ENCODE measurements at regions of chr2 and their contacts with region 1.

Region 1: DNA sequence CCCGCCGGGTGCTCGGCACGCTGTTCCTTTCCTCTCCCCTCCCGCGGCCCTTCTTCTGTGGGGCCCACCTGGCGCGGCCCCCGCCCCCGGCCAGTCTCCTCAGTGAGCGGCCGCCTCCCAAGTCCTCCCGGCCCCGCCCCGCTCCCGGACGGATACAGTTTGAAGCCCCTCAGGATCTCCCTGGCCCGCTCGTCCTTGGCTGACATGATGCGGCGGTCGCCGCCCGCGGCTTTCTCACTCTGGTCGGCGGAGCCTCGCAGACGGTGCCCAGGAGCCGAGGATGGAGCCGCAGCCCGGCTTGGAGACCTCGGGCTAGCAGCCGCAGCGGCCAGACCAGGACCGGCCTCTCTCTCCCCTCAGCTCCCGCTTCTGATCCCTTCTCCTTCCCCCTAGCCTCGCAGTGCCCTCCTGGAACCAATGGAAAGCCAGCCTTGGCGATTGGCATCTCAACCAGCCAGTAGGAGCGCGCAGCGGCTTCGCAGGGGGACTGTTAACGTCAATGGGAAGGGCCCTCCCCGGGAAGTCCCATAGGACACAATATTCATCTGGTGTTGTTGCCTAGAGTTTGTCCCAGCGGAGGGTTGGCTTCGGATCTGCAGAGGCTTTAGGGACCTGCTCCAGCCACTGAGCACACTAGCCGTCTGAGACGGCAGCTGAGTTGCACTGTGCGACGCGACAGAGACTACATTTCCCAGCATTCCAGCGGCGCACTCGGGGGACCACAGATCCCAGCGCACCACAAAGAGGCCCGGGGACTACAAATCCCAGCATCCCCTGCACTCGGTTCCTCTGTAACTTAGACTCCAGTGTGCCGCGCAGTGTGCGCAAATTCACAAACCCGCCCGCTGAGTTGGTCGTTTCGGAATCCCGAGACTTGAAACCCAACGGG is at the start of gene PDE6D:
- DNase-seq: peak; percentile 90 to 99 (median 95)
- ATAC-seq: peak; percentile 89
- H3K4me3 ChIP-seq: peak within 1 kb of the TSS; percentile 78 to 97
- H3K4me3 Mint-ChIP-seq: peak within 1 kb of the TSS; percentile 99
- H3K27ac ChIP-seq: peak within 1 kb of the TSS; percentile 53 to 89
- H3K27ac Mint-ChIP-seq: peak within 1 kb of the TSS; percentile 96
- H3K4me1 ChIP-seq: peaks cover 44% of the 10 kb centered on the region
- H3K4me1 Mint-ChIP-seq: peaks cover 71% of the 10 kb centered on the region
- H3K27me3 ChIP-seq: no peaks in the 10 kb centered on the region
- H3K27me3 Mint-ChIP-seq: no peaks in the 10 kb centered on the region
- CTCF ChIP-seq: no peak
- total RNA-seq, gene PDE6D: 4.7 to 5.6 TPM

Region 2: GRCh38 chr2:229927817-229928321 is 1853.3 kb before region 1 on chr2:
- CTCF ChIA-PET with region 1: no interaction called
- POLR2A ChIA-PET with region 1: no interaction called
- intact Hi-C with region 1: loop called (anchors 5 to 10 kb)
- DNase-seq: peak in 1 of 9 experiments; percentile 36
- ATAC-seq: peak; percentile 38
- H3K4me3 ChIP-seq: no peak overlapping the region
- H3K4me3 Mint-ChIP-seq: no peak overlapping the region
- H3K27ac ChIP-seq: no peak overlapping the region
- H3K27ac Mint-ChIP-seq: no peak overlapping the region
- H3K4me1 ChIP-seq: no peaks in the 10 kb centered on the region
- H3K4me1 Mint-ChIP-seq: peaks cover 27% of the 10 kb centered on the region
- H3K27me3 ChIP-seq: no peaks in the 10 kb centered on the region
- H3K27me3 Mint-ChIP-seq: no peaks in the 10 kb centered on the region
- CTCF ChIP-seq: no peak

Region 3: GRCh38 chr2:231463698-231464575 is 317.2 kb before region 1 on chr2 and contains the start of gene NCL:
- CTCF ChIA-PET with region 1: no interaction called
- POLR2A ChIA-PET with region 1: no interaction called
- intact Hi-C with region 1: loop called (anchors 1 to 5 kb)
- DNase-seq: peak; percentile 71 to 94 (median 82)
- ATAC-seq: peak; percentile 62
- H3K4me3 ChIP-seq: peak within 1 kb of the TSS; percentile 97
- H3K4me3 Mint-ChIP-seq: peak within 1 kb of the TSS; percentile 96
- H3K27ac ChIP-seq: peak within 1 kb of the TSS; percentile 97 to 98
- H3K27ac Mint-ChIP-seq: peak within 1 kb of the TSS; percentile 100
- H3K4me1 ChIP-seq: peaks cover 36% of the 10 kb centered on the region
- H3K4me1 Mint-ChIP-seq: peaks cover 52% of the 10 kb centered on the region
- H3K27me3 ChIP-seq: no peaks in the 10 kb centered on the region
- H3K27me3 Mint-ChIP-seq: no peaks in the 10 kb centered on the region
- CTCF ChIP-seq: no peak
- total RNA-seq, gene NCL: 390 to 394 TPM

Region 4: GRCh38 chr2:231662028-231662810 is 118.9 kb before region 1 on chr2:
- CTCF ChIA-PET with region 1: no interaction called
- POLR2A ChIA-PET with region 1: no interaction called
- intact Hi-C with region 1: loop called in 1 of 2 experiments (anchors 2 kb)
- DNase-seq: peak; percentile 94 to 99 (median 96)
- ATAC-seq: peak; percentile 91
- H3K4me3 ChIP-seq: peak overlapping the region; percentile 60 to 82
- H3K4me3 Mint-ChIP-seq: peak overlapping the region; percentile 77
- H3K27ac ChIP-seq: peak overlapping the region; percentile 87 to 94
- H3K27ac Mint-ChIP-seq: peak overlapping the region; percentile 97
- H3K4me1 ChIP-seq: peaks cover 16% of the 10 kb centered on the region
- H3K4me1 Mint-ChIP-seq: peaks cover 14% of the 10 kb centered on the region
- H3K27me3 ChIP-seq: no peaks in the 10 kb centered on the region
- H3K27me3 Mint-ChIP-seq: no peaks in the 10 kb centered on the region
- CTCF ChIP-seq: no peak

Region 5: DNA sequence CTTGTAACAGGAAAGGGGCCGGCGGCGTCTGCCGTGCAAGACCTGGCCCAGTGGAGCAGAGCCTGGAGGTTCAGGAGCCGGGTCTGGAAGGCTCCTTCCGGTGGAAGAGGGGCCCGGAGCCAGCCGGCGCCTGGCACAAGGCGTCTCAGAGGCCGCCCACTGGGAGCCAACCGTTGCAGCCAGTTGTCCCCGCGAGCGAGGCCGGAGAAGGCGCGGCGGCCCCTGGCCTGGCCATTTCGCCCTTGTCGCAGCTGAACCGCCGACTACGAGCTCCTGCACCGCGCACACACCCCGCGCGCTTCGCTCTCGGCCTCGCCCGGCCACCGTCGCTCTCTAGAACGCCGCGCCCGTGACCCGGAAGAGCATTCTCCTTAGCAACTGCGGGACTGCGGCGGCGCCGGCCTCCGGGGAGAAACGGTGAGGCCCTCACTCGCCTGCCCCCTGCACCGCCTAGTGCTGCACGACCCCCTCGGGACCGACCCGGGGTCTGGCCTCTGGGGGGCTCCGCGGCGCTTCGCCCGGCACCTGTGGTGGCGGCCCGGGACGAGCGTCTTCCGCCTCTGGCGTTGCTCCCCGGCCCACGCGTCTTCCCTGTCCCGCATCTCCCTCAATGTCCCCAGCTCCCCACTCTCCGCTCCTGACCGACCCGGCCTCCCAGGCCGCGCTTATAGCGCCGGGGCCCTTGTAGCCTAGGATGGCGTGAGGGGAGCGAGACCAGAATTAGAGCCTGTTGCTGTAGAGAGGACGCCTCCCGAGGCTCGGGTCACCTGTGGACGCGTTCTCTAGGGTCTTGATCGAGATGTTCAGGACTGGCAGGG is 180.4 kb after region 1 on chr2 and contains the start of gene DIS3L2:
- CTCF ChIA-PET with region 1: no interaction called
- POLR2A ChIA-PET with region 1: no interaction called
- intact Hi-C with region 1: loop called (anchors 2 to 10 kb)
- DNase-seq: peak; percentile 60 to 89 (median 78)
- ATAC-seq: peak; percentile 94
- H3K4me3 ChIP-seq: peak within 1 kb of the TSS; percentile 78 to 80
- H3K4me3 Mint-ChIP-seq: peak within 1 kb of the TSS; percentile 95
- H3K27ac ChIP-seq: peak within 1 kb of the TSS; percentile 57 to 68
- H3K27ac Mint-ChIP-seq: peak within 1 kb of the TSS; percentile 92
- H3K4me1 ChIP-seq: peaks cover 20% of the 10 kb centered on the region
- H3K4me1 Mint-ChIP-seq: peaks cover 43% of the 10 kb centered on the region
- H3K27me3 ChIP-seq: no peaks in the 10 kb centered on the region
- H3K27me3 Mint-ChIP-seq: no peaks in the 10 kb centered on the region
- CTCF ChIP-seq: no peak
- total RNA-seq, gene DIS3L2: 46.9 to 56.5 TPM